Activated T-helper 1 cell treated with anti-CD3 and anti-CD28 coated beads, Interleukin-12 subunit alpha, Interleukin-12 subunit beta, Interleukin-2, Interleukin-4 antibody, amounts not matched to agents 30 ng/mL and 10 ng/mL and 1 ng/mL, durations not matched to agents 14 hours and 24 hours and 36 hours (primary cell): ENCODE measurements at regions of chr17 and their contacts with region 1.

Region 1: DNA sequence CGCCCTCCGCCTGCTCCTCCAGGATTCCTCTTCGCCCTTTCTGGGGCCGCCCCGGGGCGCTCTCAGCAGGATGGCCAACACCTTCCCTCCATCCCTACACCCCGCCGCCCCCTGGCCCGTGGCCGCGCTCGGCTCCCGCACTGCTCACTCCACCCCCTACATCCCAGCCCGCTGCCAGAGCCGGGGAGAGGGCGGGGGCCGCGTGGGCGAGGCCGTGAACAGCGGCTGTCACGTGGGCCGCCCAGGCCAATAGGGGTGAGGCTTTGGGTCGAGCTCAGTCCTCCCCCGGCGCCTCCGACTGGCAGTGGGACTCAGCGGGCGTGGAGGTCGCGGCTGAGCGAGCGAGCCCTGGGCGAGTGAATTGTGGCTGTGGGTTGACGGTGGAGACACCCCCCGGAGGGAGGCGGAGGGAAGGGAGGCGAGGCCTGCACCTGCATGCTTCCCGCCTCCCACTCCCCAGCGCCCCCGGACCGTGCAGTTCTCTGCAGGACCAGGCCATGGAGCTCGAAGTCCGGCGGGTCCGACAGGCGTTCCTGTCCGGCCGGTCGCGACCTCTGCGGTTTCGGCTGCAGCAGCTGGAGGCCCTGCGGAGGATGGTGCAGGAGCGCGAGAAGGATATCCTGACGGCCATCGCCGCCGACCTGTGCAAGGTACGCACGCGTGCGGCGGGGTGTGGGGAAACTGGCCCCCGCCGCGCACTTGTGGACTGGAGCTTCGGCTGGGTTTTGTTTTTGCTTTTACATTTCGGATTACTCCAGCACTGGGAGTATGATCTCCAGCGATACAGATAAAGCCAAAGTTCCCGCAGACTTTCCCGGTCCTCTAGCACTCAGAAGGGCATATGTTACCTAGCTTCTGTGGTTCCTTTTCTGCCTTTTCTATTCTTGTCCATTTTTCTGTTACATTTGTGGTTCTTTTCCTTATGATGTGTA is at the start of gene ALDH3A2:
- DNase-seq: peak; percentile 93
- H3K4me3 Mint-ChIP-seq: peak within 1 kb of the TSS; percentile 92
- H3K27ac Mint-ChIP-seq: peak within 1 kb of the TSS; percentile 95
- H3K4me1 Mint-ChIP-seq: peaks cover 46% of the 10 kb centered on the region
- H3K27me3 Mint-ChIP-seq: peaks cover 13% of the 10 kb centered on the region
- total RNA-seq, gene ALDH3A2: 36.5 and 38.1 TPM in 2 replicates

Region 2: GRCh38 chr17:19362277-19363113 is 286.2 kb before region 1 on chr17 and contains the start of gene B9D1:
- intact Hi-C with region 1: loop called (anchors 5 kb)
- DNase-seq: peak; percentile 85
- H3K4me3 Mint-ChIP-seq: peak within 1 kb of the TSS; percentile 87
- H3K27ac Mint-ChIP-seq: peak within 1 kb of the TSS; percentile 67
- H3K4me1 Mint-ChIP-seq: peaks cover 7% of the 10 kb centered on the region
- H3K27me3 Mint-ChIP-seq: peaks cover 16% of the 10 kb centered on the region
- total RNA-seq, gene B9D1: 4.3 and 5.6 TPM in 2 replicates

Region 3: GRCh38 chr17:19507775-19508576 is 140.8 kb before region 1 on chr17:
- intact Hi-C with region 1: loop called (anchors 2 kb)
- DNase-seq: peak; percentile 72
- H3K4me3 Mint-ChIP-seq: peak overlapping the region; percentile 94
- H3K27ac Mint-ChIP-seq: peak overlapping the region; percentile 98
- H3K4me1 Mint-ChIP-seq: peaks cover 11% of the 10 kb centered on the region
- H3K27me3 Mint-ChIP-seq: peaks cover 18% of the 10 kb centered on the region

Region 4: DNA sequence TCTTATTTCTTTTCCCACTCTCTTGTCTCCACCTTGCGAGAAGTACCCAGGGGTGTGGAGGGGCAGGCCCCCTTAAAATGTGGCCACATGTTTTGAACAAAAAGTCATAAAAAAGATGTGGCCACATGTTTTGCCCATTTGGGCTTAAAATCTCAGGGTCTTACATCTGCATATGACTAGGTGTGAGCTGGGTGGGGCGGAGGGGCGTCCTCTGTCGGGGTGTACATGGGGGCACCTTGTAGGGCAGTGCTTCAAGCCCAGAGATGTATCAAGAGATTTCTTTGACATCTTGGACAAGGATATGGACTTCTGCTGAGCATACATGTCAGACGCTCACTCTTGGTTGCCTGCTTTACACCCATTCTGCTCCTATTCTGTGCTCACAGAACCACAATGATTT is 128.1 kb before region 1 on chr17:
- intact Hi-C with region 1: no loop called
- DNase-seq: no peak
- H3K4me3 Mint-ChIP-seq: no peak overlapping the region
- H3K27ac Mint-ChIP-seq: no peak overlapping the region
- H3K4me1 Mint-ChIP-seq: no peaks in the 10 kb centered on the region
- H3K27me3 Mint-ChIP-seq: peaks cover 10% of the 10 kb centered on the region

Region 5: GRCh38 chr17:19579867-19580565 is 68.7 kb before region 1 on chr17:
- intact Hi-C with region 1: no loop called
- DNase-seq: no peak
- H3K4me3 Mint-ChIP-seq: no peak overlapping the region
- H3K27ac Mint-ChIP-seq: no peak overlapping the region
- H3K4me1 Mint-ChIP-seq: no peaks in the 10 kb centered on the region
- H3K27me3 Mint-ChIP-seq: peaks cover 38% of the 10 kb centered on the region

Region 6: DNA sequence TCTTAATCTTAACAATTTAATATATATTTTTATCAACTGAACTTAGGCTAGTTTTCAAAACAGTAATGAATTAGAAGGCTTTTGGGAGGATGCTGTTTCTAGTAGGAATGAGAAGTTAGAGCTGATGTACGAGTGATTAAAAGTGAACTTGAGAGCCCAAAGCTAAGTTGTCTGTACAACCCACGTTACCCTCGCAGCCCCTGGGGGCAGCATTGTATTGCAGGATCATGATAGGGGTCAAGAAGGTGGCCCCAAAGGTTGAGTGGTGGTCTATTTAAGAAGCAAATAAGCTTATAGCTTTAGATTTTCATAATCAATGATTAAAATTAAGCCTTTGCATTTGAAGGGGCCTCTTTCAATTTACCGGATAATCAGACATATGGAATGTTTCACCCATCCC is 33.8 kb before region 1 on chr17:
- intact Hi-C with region 1: no loop called
- DNase-seq: no peak
- H3K4me3 Mint-ChIP-seq: no peak overlapping the region
- H3K27ac Mint-ChIP-seq: no peak overlapping the region
- H3K4me1 Mint-ChIP-seq: no peaks in the 10 kb centered on the region
- H3K27me3 Mint-ChIP-seq: no peaks in the 10 kb centered on the region

Region 7: GRCh38 chr17:19766422-19767270 is 117.9 kb after region 1 on chr17:
- intact Hi-C with region 1: loop called (anchors 1 kb)
- DNase-seq: peak; percentile 67
- H3K4me3 Mint-ChIP-seq: no peak overlapping the region
- H3K27ac Mint-ChIP-seq: peak overlapping the region; percentile 2
- H3K4me1 Mint-ChIP-seq: peaks cover 40% of the 10 kb centered on the region
- H3K27me3 Mint-ChIP-seq: peaks cover 2% of the 10 kb centered on the region

Region 8: DNA sequence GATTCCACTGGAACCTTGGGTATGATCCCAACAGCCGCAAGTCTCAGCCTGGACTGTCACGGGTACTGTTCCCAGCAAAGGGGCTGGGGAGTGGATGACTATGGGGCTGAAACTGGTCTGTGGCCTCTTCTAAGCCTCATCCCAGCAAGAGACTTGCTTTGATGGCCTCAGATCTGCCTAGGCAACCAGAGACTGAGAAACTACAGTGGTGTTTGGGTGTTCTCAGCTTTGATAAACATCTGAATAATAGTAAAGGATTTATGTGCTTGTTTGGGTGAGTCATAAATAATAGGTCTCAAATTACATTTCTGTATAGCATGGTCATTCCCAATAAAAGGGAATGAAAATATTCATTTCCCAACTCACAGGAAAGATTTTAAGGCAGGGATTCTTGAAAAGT is 249.2 kb after region 1 on chr17:
- intact Hi-C with region 1: no loop called
- DNase-seq: no peak
- H3K4me3 Mint-ChIP-seq: no peak overlapping the region
- H3K27ac Mint-ChIP-seq: no peak overlapping the region
- H3K4me1 Mint-ChIP-seq: no peaks in the 10 kb centered on the region
- H3K27me3 Mint-ChIP-seq: no peaks in the 10 kb centered on the region

Region 9: DNA sequence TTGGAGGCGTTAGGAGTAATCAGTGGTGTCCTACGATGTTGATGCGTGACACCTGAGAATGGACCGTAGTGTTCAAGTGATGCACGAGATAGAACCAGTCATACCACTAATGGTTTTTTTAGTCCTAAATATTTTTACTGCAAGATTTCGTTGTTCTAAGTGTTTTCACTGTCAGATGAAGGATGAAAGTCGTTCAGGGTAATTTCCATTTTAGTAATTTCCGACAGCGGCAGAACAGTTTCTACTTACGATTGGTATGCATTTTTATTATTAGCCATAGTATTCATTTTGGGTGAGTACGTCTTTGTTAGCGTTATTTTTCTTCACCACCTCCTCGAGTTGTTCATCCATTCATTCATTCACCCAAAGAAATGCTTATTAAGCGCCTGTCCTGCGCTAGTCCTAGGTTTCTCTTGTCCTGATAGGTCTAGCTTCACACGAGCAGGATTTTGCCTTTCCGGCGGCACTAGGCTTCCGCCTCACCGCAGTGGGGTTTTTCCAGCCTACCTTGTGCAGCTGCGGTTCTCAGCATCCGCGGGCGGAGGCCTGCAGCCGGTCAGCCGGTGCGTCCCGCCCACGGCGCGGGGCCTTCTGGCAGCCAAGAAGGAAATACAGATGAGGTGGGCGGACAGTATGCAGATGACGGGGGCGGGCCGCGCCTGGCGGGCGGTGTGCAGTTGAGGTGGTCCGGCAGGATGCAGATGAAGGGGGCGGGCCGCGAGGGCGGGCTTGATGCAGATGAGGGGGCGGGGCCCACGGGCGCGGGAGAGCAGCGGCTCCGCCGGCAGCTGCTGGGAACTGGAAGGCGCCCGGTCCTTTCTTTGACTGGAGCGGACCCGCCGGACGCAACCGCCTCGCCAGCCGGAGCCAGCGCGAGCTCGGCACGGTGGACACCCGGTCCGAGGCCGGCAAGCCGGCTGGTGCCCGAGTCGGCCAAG is 506.8 kb after region 1 on chr17:
- intact Hi-C with region 1: loop called (anchors 2 kb)
- DNase-seq: peak; percentile 96
- H3K4me3 Mint-ChIP-seq: no peak overlapping the region
- H3K27ac Mint-ChIP-seq: no peak overlapping the region
- H3K4me1 Mint-ChIP-seq: no peaks in the 10 kb centered on the region
- H3K27me3 Mint-ChIP-seq: peaks cover 16% of the 10 kb centered on the region